Activated CD4-positive, alpha-beta T cell treated with anti-CD3 and anti-CD28 coated beads, Interleukin-2, amount 10 ng/mL, durations not matched to agents 7 days and 5 days (primary cell): ENCODE measurements at regions of chr11 and their contacts with region 1.

Region 1: DNA sequence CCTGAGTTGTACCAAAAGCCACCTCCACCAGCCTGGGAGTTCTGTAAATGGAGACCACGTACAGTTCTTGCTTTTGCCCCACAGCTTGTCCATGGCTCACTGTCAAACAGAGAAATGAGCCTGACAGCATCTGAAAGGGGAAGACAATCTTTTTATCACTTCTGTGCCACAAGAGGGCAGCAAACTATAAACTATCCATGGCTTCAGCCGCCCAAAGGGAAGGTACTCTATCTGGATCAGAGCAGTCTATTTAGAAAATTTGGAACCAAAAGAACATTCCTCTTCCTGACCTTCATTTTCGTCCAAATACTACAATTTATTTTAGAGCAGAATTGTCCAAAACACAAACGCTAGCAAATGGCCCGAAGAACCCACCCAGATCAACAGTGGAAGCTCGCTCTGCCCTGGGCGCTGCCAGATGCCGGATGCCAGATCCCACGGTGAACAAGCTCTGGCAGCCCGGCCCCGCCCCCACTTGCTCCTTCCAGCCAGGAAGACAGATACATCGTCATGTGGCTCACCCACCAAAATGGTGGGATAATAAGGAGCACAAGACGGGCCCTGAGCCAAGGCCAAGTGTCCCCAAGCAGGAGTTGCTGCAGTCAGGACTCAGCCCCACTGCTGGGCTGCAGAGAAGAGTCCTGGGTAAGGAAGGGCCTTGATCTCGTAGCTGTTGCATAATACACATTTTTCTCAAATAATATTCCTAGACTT is 23.9 kb upstream of the SCGB1A1 start:
- DNase-seq: peak; percentile 71
- H3K4me3 Mint-ChIP-seq: no peak overlapping the region
- H3K27ac Mint-ChIP-seq: no peak overlapping the region
- H3K4me1 Mint-ChIP-seq: peaks cover 22% of the 10 kb centered on the region
- H3K27me3 Mint-ChIP-seq: peaks cover 4% of the 10 kb centered on the region

Region 2: DNA sequence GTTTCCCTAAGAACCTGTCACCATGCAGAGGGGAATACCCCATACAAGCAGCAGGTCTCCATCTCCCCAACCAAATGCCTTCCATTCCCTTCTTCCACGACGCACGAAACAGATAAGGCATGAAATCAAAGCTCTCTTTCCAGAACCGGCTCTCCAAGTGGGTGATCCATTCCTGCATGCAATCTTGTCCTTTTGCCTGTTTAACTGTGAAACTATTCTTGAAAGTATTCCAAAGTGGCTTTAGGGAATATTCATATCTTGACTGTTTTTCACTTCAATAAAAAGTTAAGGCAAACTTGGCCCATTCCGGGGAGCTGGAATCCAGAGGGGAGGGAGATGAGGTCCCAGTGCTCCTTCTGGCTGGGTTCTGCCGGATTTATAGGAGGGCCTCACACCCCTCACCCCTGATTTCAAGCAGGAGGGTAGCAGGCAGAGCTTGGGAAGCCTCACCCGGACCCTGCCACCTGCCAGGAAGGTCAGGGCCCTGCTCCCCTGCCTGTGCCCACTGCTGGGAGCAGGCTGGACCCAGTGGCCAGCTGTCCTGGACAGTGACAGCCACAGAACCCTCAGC is 84.7 kb after region 1 on chr11:
- CTCF ChIA-PET with region 1: no interaction called
- POLR2A ChIA-PET with region 1: no interaction called
- DNase-seq: no peak
- H3K4me3 Mint-ChIP-seq: no peak overlapping the region
- H3K27ac Mint-ChIP-seq: no peak overlapping the region
- H3K4me1 Mint-ChIP-seq: no peaks in the 10 kb centered on the region
- H3K27me3 Mint-ChIP-seq: no peaks in the 10 kb centered on the region

Region 3: GRCh38 chr11:62556108-62556871 is 161.3 kb after region 1 on chr11:
- CTCF ChIA-PET with region 1: interaction called, 10 read pairs
- POLR2A ChIA-PET with region 1: interaction called, 5 read pairs
- DNase-seq: peak; percentile 92
- H3K4me3 Mint-ChIP-seq: peak overlapping the region; percentile 75
- H3K27ac Mint-ChIP-seq: peak overlapping the region; percentile 99
- H3K4me1 Mint-ChIP-seq: peaks cover 95% of the 10 kb centered on the region
- H3K27me3 Mint-ChIP-seq: no peaks in the 10 kb centered on the region

Region 4: DNA sequence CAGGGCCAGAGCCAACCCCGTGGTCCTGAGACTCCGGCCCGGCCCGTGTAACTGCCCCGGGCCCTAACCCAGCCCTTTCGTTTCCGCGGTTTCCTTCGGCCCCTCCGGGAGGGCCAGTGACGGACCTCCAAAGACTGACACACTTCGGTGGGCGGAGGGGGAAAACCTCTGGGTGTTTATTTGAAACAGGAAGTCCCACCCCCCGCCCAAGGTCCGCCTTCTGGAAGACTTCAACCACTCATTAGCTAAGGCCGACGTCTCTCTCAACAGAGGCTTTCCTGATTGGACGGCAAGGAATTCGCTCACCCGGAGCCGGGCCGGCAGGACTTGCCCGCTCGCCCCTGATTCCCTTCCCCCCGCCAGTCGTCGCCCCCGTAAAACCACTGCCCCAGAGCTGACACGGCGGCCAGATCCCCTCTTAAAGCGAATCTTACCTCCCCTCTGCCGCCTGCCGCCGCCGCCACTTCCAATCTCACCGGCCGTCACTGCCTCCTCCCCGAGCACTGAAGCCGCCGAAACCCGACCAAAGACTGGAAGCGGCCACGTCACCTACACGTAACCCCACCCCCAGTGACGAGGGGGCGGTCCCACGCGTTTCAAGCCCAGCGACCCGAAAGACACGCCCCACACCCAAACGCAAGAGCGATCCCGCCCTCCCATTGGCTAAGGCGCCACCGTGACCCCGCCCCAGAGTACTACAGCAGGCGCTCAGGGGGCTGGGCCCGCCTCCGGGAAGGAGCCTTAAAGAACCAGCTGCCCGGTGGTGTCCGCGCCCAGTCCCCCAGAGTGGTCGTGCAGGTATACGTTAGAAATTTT is 436.7 kb after region 1 on chr11 and contains the start of gene STX5:
- CTCF ChIA-PET with region 1: no interaction called
- POLR2A ChIA-PET with region 1: no interaction called
- DNase-seq: peak; percentile 100
- H3K4me3 Mint-ChIP-seq: peak within 1 kb of the TSS; percentile 94
- H3K27ac Mint-ChIP-seq: peak within 1 kb of the TSS; percentile 99
- H3K4me1 Mint-ChIP-seq: peaks cover 36% of the 10 kb centered on the region
- H3K27me3 Mint-ChIP-seq: no peaks in the 10 kb centered on the region
- total RNA-seq, gene STX5: 34.1 to 41.0 TPM